SK-N-SH (cell line): ENCODE measurements at regions of chr2 and their contacts with region 1.

Region 1: GRCh38 chr2:232521959-232522622 is 1.9 kb downstream of the PRSS56 start:
- DNase-seq: peak; percentile 96
- H3K4me3 ChIP-seq: peak overlapping the region; percentile 9 to 44; a peak in 2 of 4 replicates
- H3K27ac ChIP-seq: no peak overlapping the region
- H3K4me1 ChIP-seq: peaks cover 0 to 23% of the 10 kb centered on the region in 2 experiments; a peak in 1 of 4 replicates
- H3K27me3 ChIP-seq: peaks cover 29% of the 10 kb centered on the region
- CTCF ChIP-seq: peak; percentile 71
- EP300 ChIP-seq: no peak
- RAD21 ChIP-seq: peak; percentile 78

Region 2: DNA sequence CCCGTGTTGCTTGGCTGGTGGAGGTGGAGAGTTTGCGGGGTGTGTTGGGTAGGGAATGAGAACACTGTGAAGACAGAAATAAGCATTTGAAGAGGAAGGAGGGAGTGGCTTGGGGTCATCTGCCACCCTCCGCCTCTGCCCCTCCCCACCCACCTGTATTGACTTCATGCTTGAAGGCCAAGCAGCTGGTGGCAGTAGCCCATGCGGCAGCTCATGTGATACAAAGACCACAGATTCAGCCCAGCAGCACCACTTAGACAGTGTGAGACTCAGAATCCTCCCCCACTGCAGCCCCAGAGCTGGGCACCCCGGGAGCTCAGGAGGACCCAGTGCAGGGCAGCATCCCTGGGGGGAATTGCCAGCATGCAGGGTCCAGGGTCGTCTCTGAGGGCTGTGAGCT is 611.3 kb before region 1 on chr2:
- CTCF ChIA-PET with region 1: interaction called, 11 read pairs
- POLR2A ChIA-PET with region 1: no interaction called
- DNase-seq: no peak
- H3K4me3 ChIP-seq: no peak overlapping the region
- H3K27ac ChIP-seq: no peak overlapping the region
- H3K4me1 ChIP-seq: no peaks in the 10 kb centered on the region
- H3K27me3 ChIP-seq: 0 out of 2 replicates have a peak, but pooled peaks cover 4% of the 10 kb centered on the region
- CTCF ChIP-seq: no peak
- EP300 ChIP-seq: no peak
- RAD21 ChIP-seq: no peak

Region 3: DNA sequence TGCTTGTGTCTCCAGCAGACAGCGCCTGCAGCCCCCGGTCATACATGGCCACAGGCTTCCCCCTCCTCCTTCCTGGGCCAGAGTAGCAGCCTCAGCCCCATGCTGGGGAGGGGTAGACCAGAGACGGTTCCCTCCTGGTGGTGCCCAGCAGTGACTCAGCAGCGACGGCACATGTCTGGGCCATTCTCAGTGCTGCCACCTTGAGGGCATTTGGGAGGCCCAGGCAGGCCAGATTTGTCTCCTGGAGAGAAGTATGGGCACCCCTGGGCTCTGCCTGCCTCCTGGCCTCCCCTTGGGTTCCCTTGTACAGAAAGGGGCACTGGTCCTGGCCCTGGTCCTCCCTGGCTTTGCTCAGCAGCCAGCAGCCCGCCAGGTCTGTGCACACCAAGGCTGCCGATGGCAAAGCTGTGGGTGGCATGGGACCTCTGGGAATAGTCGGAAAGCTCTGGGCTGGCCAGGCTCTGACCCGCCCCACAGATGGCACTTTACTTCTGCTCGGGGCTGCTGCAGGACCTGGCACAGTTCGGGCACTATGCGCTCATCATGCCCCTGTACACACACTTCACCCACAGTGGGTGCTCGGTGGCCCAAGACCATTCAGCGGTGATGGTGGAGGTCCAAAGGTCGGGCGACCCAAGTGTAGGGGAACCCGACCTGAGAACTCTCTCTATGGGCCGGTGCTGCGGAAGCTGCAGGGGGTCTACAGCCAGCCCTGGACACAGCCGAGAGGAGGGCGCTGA is 77.5 kb before region 1 on chr2:
- CTCF ChIA-PET with region 1: interaction called, 196 read pairs
- POLR2A ChIA-PET with region 1: no interaction called
- DNase-seq: peak; percentile 75
- H3K4me3 ChIP-seq: no peak overlapping the region; a peak in 1 of 4 replicates
- H3K27ac ChIP-seq: no peak overlapping the region
- H3K4me1 ChIP-seq: no peaks in the 10 kb centered on the region; a peak in 1 of 4 replicates
- H3K27me3 ChIP-seq: no peaks in the 10 kb centered on the region
- CTCF ChIP-seq: peak; percentile 64
- EP300 ChIP-seq: no peak
- RAD21 ChIP-seq: no peak; the same call in 1 of the 2 replicates

Region 4: GRCh38 chr2:232473467-232473890 is 48.6 kb before region 1 on chr2:
- CTCF ChIA-PET with region 1: interaction called, 56 read pairs
- POLR2A ChIA-PET with region 1: no interaction called
- DNase-seq: peak; percentile 70
- H3K4me3 ChIP-seq: no peak overlapping the region
- H3K27ac ChIP-seq: no peak overlapping the region
- H3K4me1 ChIP-seq: peaks cover 0 to 4% of the 10 kb centered on the region in 2 experiments; a peak in 1 of 4 replicates
- H3K27me3 ChIP-seq: peaks cover 44% of the 10 kb centered on the region
- CTCF ChIP-seq: no peak
- EP300 ChIP-seq: no peak
- RAD21 ChIP-seq: no peak

Region 5: GRCh38 chr2:232502911-232503808 is 18.9 kb before region 1 on chr2:
- CTCF ChIA-PET with region 1: interaction called, 24 read pairs
- POLR2A ChIA-PET with region 1: no interaction called
- DNase-seq: peak; percentile 90
- H3K4me3 ChIP-seq: peak overlapping the region; percentile 23 to 33; a peak in 2 of 4 replicates
- H3K27ac ChIP-seq: no peak overlapping the region
- H3K4me1 ChIP-seq: peaks cover 0 to 45% of the 10 kb centered on the region in 2 experiments; a peak in 1 of 4 replicates
- H3K27me3 ChIP-seq: peaks cover 23% of the 10 kb centered on the region
- CTCF ChIP-seq: no peak
- EP300 ChIP-seq: 0 out of 4 replicates have a peak, but pooled peaks of 1 of the 2 experiments have one; percentile 6
- RAD21 ChIP-seq: no peak

Region 6: DNA sequence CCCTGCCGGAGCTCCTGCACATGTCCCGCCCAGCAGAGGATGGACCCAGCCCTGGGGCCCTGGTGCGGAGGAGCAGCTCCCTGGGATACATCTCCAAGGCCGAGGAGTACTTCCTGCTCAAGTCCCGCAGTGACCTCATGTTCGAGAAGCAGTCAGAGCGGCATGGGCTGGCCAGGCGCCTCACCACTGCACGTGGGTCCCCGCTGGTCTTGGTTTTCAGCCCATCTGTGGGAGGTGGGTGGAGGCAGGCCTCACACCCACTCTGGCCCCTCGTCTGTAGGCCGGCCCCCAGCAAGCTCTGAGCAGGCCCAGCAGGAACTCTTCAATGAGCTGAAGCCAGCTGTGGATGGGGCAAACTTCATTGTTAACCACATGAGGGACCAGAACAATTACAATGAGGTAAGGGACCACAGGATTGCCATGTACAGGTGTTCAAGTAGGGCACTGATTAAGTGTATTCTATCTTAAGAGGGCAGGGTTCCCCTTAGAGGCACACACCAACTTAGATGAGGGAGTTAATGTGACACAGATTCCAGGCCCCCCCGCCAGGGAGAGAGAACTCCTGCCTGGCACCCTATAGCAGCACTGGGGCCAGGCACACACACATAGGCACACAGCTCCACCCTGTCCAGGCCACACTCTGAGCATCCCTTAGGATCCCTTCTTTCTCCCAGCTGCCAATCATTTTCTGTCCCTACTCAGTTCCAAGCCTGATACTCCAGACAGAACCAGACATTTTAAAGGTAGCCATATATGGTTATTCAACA is 12.0 kb after region 1 on chr2:
- CTCF ChIA-PET with region 1: interaction called, 32 read pairs
- POLR2A ChIA-PET with region 1: no interaction called
- DNase-seq: no peak
- H3K4me3 ChIP-seq: no peak overlapping the region
- H3K27ac ChIP-seq: no peak overlapping the region
- H3K4me1 ChIP-seq: peaks cover 0 to 5% of the 10 kb centered on the region in 2 experiments; a peak in 1 of 4 replicates
- H3K27me3 ChIP-seq: no peaks in the 10 kb centered on the region
- CTCF ChIP-seq: no peak
- EP300 ChIP-seq: no peak
- RAD21 ChIP-seq: no peak

Region 7: DNA sequence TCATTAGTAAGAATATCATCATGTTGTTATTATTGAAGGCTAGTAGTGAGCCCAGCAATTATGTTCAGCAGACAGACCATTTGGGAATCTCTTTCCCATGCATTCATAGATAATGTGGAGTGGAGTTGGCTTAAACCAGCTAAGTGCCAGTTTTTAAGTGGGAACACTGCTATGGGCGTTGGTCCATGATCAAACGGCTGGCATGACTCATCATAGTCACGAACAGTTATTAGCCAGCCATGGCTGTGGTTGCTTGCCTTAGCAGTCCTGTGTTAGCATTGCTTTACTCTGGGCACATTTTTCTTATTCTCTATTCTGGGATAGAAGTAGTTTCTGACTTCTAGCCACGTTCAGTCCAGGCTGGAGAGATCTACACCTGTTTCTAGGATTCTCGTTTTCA is 46.1 kb after region 1 on chr2:
- CTCF ChIA-PET with region 1: no interaction called
- POLR2A ChIA-PET with region 1: no interaction called
- DNase-seq: no peak
- H3K4me3 ChIP-seq: no peak overlapping the region
- H3K27ac ChIP-seq: 0 out of 4 replicates have a peak overlapping the region, but pooled peaks of 1 of the 2 experiments have one; percentile 2
- H3K4me1 ChIP-seq: no peaks in the 10 kb centered on the region
- H3K27me3 ChIP-seq: no peaks in the 10 kb centered on the region
- CTCF ChIP-seq: no peak
- EP300 ChIP-seq: no peak
- RAD21 ChIP-seq: no peak